HepG2 (cell line): ENCODE measurements at regions of chr15 and their contacts with region 1.

Region 1: DNA sequence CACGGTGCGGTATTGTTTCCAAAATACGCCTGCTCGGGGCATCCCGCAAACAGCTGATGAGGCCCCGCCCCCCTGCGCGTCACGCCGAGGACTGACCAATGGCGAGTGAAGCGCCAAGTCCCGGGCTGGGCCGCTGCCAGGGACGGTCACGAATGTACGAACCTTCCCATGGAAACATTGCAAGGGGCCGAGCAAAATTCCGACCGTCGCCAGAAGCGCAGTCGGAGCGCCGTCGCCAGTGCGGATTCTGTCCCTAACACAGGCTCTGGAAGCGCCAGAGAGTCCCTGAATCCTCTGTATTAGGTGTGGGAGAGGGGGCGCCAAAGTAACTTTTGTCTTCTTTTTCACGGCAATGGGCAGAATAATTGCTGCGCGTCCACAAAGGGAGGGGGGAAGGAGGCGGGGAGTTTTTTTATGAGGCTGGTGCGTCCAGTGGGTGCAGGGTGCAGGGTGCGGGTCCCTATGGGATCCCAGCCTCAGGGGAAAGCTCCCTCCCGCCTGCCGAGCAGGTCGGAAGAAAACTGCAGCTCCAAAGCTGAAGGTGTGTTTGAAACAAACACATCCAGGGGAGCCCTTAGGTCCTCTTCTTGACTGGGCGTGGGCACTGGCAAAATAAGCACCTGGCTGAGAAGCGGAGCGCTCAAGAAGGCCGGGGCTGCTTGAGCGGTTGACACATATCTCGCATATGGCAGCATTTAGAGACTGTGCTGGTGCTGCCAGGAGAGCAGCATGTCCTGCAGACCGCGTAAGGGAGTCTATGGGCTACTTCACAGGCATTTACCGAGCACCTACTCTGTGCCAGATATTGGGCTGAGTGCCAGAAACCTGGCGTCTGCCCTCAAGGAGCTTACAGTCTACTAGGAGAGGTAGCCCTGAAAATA is at the start of gene BMF:
- DNase-seq: peak; percentile 97
- ATAC-seq: peak; percentile 73
- H3K4me3 ChIP-seq: peak within 1 kb of the TSS; percentile 85 to 93 (median 86)
- H3K27ac ChIP-seq: peak within 1 kb of the TSS; percentile 79
- H3K4me1 ChIP-seq: peaks cover 78% of the 10 kb centered on the region
- H3K27me3 ChIP-seq: no peaks in the 10 kb centered on the region
- CTCF ChIP-seq: peak; percentile 80
- EP300 ChIP-seq: peak; percentile 10 to 45; a peak in 1 of 4 replicates
- POLR2A ChIP-seq: 0 out of 4 replicates have a peak, but pooled peaks of 1 of the 2 experiments have one; percentile 28
- RAD21 ChIP-seq: peak; percentile 54
- total RNA-seq, gene BMF: 5.4 and 8.7 TPM in 2 replicates

Region 2: GRCh38 chr15:40038638-40039543 is 70.2 kb before region 1 on chr15 and contains the start of gene SRP14:
- CTCF ChIA-PET with region 1: no interaction called
- POLR2A ChIA-PET with region 1: interaction called, 60 read pairs
- in situ Hi-C with region 1: no loop called
- intact Hi-C with region 1: loop called (anchors 2 kb)
- DNase-seq: peak; percentile 91
- ATAC-seq: peak; percentile 93
- H3K4me3 ChIP-seq: peak within 1 kb of the TSS; percentile 72 to 96 (median 76)
- H3K27ac ChIP-seq: peak within 1 kb of the TSS; percentile 86
- H3K4me1 ChIP-seq: peaks cover 34% of the 10 kb centered on the region
- H3K27me3 ChIP-seq: no peaks in the 10 kb centered on the region; a peak in 2 of 5 replicates
- CTCF ChIP-seq: peak; percentile 15
- EP300 ChIP-seq: 0 out of 4 replicates have a peak, but pooled peaks of 1 of the 2 experiments have one; percentile 17
- POLR2A ChIP-seq: peak; percentile 91 to 95
- RAD21 ChIP-seq: no peak
- total RNA-seq, gene SRP14: 208 and 346 TPM in 2 replicates

Region 3: GRCh38 chr15:40069178-40070165 is 39.6 kb before region 1 on chr15:
- CTCF ChIA-PET with region 1: no interaction called
- POLR2A ChIA-PET with region 1: interaction called, 15 read pairs
- in situ Hi-C with region 1: no loop called
- intact Hi-C with region 1: loop called (anchors 5 kb)
- DNase-seq: peak; percentile 76
- ATAC-seq: peak; percentile 80
- H3K4me3 ChIP-seq: peak overlapping the region; percentile 55 to 69 (median 58); a peak in 5 of 6 replicates
- H3K27ac ChIP-seq: peak overlapping the region; percentile 69
- H3K4me1 ChIP-seq: peaks cover 47% of the 10 kb centered on the region
- H3K27me3 ChIP-seq: no peaks in the 10 kb centered on the region
- CTCF ChIP-seq: no peak; the same call in 1 of the 2 replicates
- EP300 ChIP-seq: no peak
- POLR2A ChIP-seq: peak in 1 of 2 experiments; percentile 50; a peak in 1 of 4 replicates
- RAD21 ChIP-seq: peak; percentile 66

Region 4: DNA sequence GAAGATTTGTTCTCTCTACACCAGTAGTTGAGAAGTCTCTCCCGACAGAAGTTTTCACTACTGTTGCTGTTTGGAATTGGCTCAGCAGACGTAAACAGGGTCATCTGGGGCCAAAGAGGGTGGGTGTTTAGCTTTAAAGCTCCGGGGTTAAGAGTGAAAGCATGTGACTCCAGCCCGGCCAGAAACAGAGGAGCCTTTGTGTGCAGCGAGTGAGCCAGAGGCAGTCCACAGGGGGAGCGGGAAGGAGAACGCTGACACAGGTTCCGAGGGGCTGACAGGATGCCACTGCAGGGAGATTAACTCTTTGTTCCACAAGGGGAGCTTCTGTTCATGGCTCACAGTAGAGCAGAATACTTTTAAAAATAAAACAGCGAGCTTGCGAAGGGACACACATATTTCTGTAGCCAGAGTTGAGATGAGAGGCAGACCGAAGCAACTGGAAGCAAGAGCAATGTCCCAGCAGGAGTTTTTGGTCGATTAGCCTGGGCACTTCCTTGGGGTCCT is 27.4 kb before region 1 on chr15:
- CTCF ChIA-PET with region 1: interaction called, 3 read pairs
- POLR2A ChIA-PET with region 1: interaction called, 371 read pairs
- in situ Hi-C with region 1: no loop called
- intact Hi-C with region 1: no loop called
- DNase-seq: peak; percentile 96
- ATAC-seq: peak; percentile 98
- H3K4me3 ChIP-seq: peak overlapping the region; percentile 46 to 70 (median 69)
- H3K27ac ChIP-seq: peak overlapping the region; percentile 95
- H3K4me1 ChIP-seq: peaks cover 70% of the 10 kb centered on the region
- H3K27me3 ChIP-seq: no peaks in the 10 kb centered on the region; a peak in 1 of 5 replicates
- CTCF ChIP-seq: peak; percentile 33; the same call in 1 of the 2 replicates
- EP300 ChIP-seq: peak; percentile 81 to 92; a peak in 3 of 4 replicates
- POLR2A ChIP-seq: peak; percentile 69 to 74; a peak in 3 of 4 replicates
- RAD21 ChIP-seq: no peak; the same call in 1 of the 2 replicates

Region 5: GRCh38 chr15:40098489-40099261 is 10.4 kb before region 1 on chr15:
- CTCF ChIA-PET with region 1: no interaction called
- POLR2A ChIA-PET with region 1: interaction called, 371 read pairs
- in situ Hi-C with region 1: no loop called
- intact Hi-C with region 1: loop called (anchors 2 kb)
- DNase-seq: peak; percentile 97
- ATAC-seq: peak; percentile 95
- H3K4me3 ChIP-seq: peak overlapping the region in 1 of 3 experiments; percentile 24; a peak in 2 of 6 replicates
- H3K27ac ChIP-seq: peak overlapping the region; percentile 87
- H3K4me1 ChIP-seq: peaks cover 89% of the 10 kb centered on the region
- H3K27me3 ChIP-seq: no peaks in the 10 kb centered on the region
- CTCF ChIP-seq: 0 out of 2 replicates have a peak, but pooled peaks have one; percentile 20
- EP300 ChIP-seq: peak; percentile 96 to 100
- POLR2A ChIP-seq: peak; percentile 24 to 69; a peak in 2 of 4 replicates
- RAD21 ChIP-seq: peak; percentile 65; the same call in 1 of the 2 replicates

Region 6: GRCh38 chr15:40274350-40275274 is 165.5 kb after region 1 on chr15:
- CTCF ChIA-PET with region 1: no interaction called
- POLR2A ChIA-PET with region 1: no interaction called
- in situ Hi-C with region 1: no loop called
- intact Hi-C with region 1: loop called (anchors 10 kb)
- DNase-seq: peak; percentile 60
- ATAC-seq: peak; percentile 14
- H3K4me3 ChIP-seq: peak overlapping the region in 1 of 3 experiments; percentile 41; a peak in 1 of 6 replicates
- H3K27ac ChIP-seq: no peak overlapping the region
- H3K4me1 ChIP-seq: peaks cover 43% of the 10 kb centered on the region
- H3K27me3 ChIP-seq: peaks cover 1 to 40% of the 10 kb centered on the region in 2 experiments; a peak in 4 of 5 replicates
- CTCF ChIP-seq: peak; percentile 99
- EP300 ChIP-seq: no peak
- POLR2A ChIP-seq: no peak
- RAD21 ChIP-seq: peak; percentile 97